K562 (cell line): ENCODE measurements at regions of chr13 and their contacts with region 1.

Region 1: GRCh38 chr13:92379371-92379770 is 847.2 kb upstream of the GPC6 start:
- DNase-seq: no peak
- ATAC-seq: peak; percentile 27
- H3K4me3 ChIP-seq: no peak overlapping the region
- H3K27ac ChIP-seq: no peak overlapping the region
- H3K4me1 ChIP-seq: no peaks in the 10 kb centered on the region
- H3K27me3 ChIP-seq: no peaks in the 10 kb centered on the region
- CTCF ChIP-seq: no peak
- EP300 ChIP-seq: no peak
- POLR2A ChIP-seq: no peak
- RAD21 ChIP-seq: no peak

Region 2: DNA sequence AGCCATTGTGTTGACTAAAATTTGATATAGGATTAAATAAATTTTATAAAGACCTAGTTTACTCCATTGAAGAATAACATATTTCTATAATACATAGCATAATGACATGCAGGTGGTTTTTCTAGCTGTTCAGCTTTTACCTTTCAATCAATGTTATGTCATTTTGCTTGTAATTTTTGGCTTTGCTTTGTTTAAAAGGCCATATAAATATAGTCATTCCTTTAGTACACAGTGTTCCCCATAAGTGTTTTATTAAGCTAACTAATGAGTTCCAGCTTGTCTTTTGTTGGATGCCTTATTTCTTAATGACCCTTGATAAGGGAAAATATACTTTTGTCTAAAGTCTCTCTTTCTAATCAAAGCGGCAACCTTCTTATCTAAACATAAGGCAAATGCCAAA is 59.0 kb before region 1 on chr13:
- CTCF ChIA-PET with region 1: no interaction called
- POLR2A ChIA-PET with region 1: no interaction called
- in situ Hi-C with region 1: no loop called
- intact Hi-C with region 1: loop called (anchors 5 kb)
- DNase-seq: no peak
- ATAC-seq: no peak
- H3K4me3 ChIP-seq: no peak overlapping the region
- H3K27ac ChIP-seq: no peak overlapping the region
- H3K4me1 ChIP-seq: no peaks in the 10 kb centered on the region
- H3K27me3 ChIP-seq: no peaks in the 10 kb centered on the region
- CTCF ChIP-seq: no peak
- EP300 ChIP-seq: no peak
- POLR2A ChIP-seq: no peak
- RAD21 ChIP-seq: no peak